ENCODE measurements at regions of chr9 and their contacts with region 1.

Region 1: GRCh38 chr9:113275157-113276131 is at the starts of genes CDC26 and PRPF4:
- DNase-seq: peak; percentile 96
- H3K4me3 Mint-ChIP-seq: no peak within 1 kb of the TSS
- H3K27ac Mint-ChIP-seq: no peak within 1 kb of the TSS
- H3K4me1 Mint-ChIP-seq: peaks cover 31% of the 10 kb centered on the region
- H3K27me3 Mint-ChIP-seq: no peaks in the 10 kb centered on the region
- total RNA-seq, gene CDC26: 36.3 to 38.1 TPM
- total RNA-seq, gene PRPF4: 39.9 to 44.3 TPM

Region 2: GRCh38 chr9:113150670-113151611 is 124.5 kb before region 1 on chr9 and contains the start of gene SLC31A2:
- CTCF ChIA-PET with region 1: interaction called, 5 read pairs
- intact Hi-C with region 1: loop called (anchors 1 kb)
- DNase-seq: peak; percentile 87
- H3K4me3 Mint-ChIP-seq: peak within 1 kb of the TSS; percentile 71
- H3K27ac Mint-ChIP-seq: no peak within 1 kb of the TSS
- H3K4me1 Mint-ChIP-seq: peaks cover 23% of the 10 kb centered on the region
- H3K27me3 Mint-ChIP-seq: no peaks in the 10 kb centered on the region
- total RNA-seq, gene SLC31A2: 1.2 to 1.7 TPM

Region 3: GRCh38 chr9:113309204-113309813 is 33.9 kb after region 1 on chr9:
- CTCF ChIA-PET with region 1: interaction called, 7 read pairs
- intact Hi-C with region 1: loop called (anchors 1 kb)
- DNase-seq: peak; percentile 53
- H3K4me3 Mint-ChIP-seq: no peak overlapping the region
- H3K27ac Mint-ChIP-seq: no peak overlapping the region
- H3K4me1 Mint-ChIP-seq: no peaks in the 10 kb centered on the region
- H3K27me3 Mint-ChIP-seq: no peaks in the 10 kb centered on the region

Region 4: DNA sequence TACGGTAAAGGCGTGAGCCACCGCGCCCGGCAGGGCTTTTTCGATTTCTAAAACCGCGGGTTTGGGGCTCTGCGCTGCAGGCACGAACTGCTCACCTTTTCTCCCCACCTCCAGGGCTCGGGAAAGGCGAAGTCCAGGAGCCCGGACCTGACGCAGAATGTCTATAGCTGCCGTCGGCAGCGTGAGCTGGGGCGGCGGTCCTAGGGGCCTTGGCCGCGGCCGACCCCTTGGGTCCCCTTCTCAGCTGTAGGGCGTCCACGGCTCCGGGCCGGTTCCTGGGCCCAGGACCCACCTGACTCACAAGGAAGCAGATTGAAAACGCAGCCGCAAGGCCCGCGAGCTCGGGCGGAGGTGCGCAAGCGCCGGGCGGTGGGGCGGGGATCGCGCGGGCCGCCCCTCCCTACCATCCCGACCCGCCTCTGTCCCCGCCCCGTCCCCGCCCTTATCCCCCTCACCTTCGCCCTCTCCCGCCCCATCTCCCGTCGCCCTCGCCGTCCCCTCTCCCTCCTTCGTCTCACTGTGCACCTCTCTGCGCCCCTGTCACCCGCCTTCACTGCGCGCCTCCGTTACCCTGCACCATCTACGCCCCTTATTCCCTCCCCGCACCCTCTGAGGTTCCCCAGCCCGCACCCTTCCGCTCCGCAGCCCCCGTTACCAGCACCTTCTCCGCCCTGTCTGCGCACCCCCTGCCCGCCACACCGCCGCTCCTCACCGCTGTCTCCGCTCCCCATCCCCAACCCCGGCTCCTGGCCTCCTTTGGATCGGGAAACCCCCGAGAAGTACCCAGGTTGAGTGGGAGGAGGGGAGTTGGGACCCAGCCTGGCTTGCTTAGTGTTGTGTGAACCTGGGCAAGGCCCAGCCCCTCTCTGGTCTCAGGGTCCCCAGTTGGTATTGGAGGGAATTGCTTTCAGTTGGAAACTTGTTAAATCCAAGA is 101.5 kb after region 1 on chr9 and contains the start of gene HDHD3:
- CTCF ChIA-PET with region 1: interaction called, 3 read pairs
- intact Hi-C with region 1: loop called (anchors 1 kb)
- DNase-seq: peak; percentile 82
- H3K4me3 Mint-ChIP-seq: peak within 1 kb of the TSS; percentile 81
- H3K27ac Mint-ChIP-seq: peak within 1 kb of the TSS; percentile 77
- H3K4me1 Mint-ChIP-seq: peaks cover 17% of the 10 kb centered on the region
- H3K27me3 Mint-ChIP-seq: no peaks in the 10 kb centered on the region
- total RNA-seq, gene HDHD3: 8.9 to 9.5 TPM

Region 5: GRCh38 chr9:113446323-113446740 is 170.9 kb after region 1 on chr9:
- CTCF ChIA-PET with region 1: interaction called, 4 read pairs
- intact Hi-C with region 1: loop called (anchors 1 kb)
- DNase-seq: peak; percentile 22
- H3K4me3 Mint-ChIP-seq: no peak overlapping the region
- H3K27ac Mint-ChIP-seq: no peak overlapping the region
- H3K4me1 Mint-ChIP-seq: no peaks in the 10 kb centered on the region
- H3K27me3 Mint-ChIP-seq: no peaks in the 10 kb centered on the region

Region 6: GRCh38 chr9:113501129-113501686 is 225.8 kb after region 1 on chr9:
- CTCF ChIA-PET with region 1: no interaction called
- intact Hi-C with region 1: no loop called
- DNase-seq: no peak
- H3K4me3 Mint-ChIP-seq: no peak overlapping the region
- H3K27ac Mint-ChIP-seq: no peak overlapping the region
- H3K4me1 Mint-ChIP-seq: peaks cover 10% of the 10 kb centered on the region
- H3K27me3 Mint-ChIP-seq: no peaks in the 10 kb centered on the region

Region 7: DNA sequence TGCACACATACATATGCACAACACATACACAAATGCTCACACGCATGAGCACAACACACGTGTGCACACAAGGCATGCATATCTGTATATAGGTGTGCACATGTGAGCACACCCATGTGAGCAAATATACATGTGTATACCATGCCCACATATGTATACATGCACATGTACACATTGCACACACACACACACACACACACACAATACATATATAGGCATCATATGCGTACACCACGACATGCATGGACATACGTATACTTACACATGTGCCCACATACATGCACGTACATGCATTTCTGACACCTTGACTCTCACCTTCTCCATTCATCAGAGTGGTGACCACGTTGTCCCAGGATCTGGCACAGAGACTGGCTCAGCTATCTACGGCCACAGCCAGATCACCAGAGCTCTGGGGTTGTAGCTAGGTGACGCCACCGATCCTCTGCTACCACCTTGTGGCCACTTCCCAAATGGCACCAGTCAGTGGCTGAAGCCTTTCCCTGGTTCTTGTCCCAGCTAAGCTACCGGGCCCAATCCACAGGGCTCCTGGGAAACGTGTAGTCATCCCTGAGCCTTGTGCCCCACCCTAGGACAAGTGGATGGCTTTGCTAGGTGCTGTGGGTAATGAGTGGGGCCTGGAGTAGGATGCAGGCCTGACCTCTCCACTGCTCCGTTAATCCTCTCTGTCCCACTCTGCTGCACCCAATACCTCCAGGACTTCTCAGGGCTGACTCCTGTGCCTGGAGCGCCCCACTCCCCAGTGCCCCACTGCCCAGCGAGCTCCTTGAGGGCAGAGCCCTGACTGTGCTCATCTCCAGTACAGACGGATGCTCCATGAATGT is 382.5 kb after region 1 on chr9:
- CTCF ChIA-PET with region 1: interaction called, 49 read pairs
- intact Hi-C with region 1: loop called (anchors 1 kb)
- DNase-seq: peak; percentile 88
- H3K4me3 Mint-ChIP-seq: no peak overlapping the region
- H3K27ac Mint-ChIP-seq: no peak overlapping the region
- H3K4me1 Mint-ChIP-seq: no peaks in the 10 kb centered on the region
- H3K27me3 Mint-ChIP-seq: peaks cover 6% of the 10 kb centered on the region

Region 8: DNA sequence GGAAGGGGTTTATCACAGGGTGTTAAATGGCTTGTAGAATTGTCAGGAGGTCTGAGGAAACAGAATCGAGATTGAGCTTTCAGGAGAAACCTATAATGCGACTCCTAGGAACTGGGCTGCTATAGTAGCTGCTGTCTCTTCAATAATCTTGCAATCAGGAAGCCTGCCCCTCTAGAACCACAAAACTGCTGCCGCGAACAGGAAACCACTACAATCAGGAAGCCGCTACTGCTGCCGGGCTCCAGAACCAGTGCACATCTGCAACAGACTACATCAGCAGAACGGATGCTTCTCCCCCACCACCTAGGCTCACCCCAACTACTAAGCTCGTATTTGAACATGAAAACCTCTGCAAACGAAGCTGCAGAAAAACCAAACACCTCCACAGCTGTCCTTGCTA is 1623.3 kb after region 1 on chr9:
- CTCF ChIA-PET with region 1: no interaction called
- intact Hi-C with region 1: no loop called
- DNase-seq: peak; percentile 84
- H3K4me3 Mint-ChIP-seq: no peak overlapping the region
- H3K27ac Mint-ChIP-seq: no peak overlapping the region
- H3K4me1 Mint-ChIP-seq: peaks cover 24% of the 10 kb centered on the region
- H3K27me3 Mint-ChIP-seq: no peaks in the 10 kb centered on the region